BJ (cell line): ENCODE measurements at regions of chr22 and their contacts with region 1.

Region 1: GRCh38 chr22:38503021-38503420 is 3.1 kb downstream of the DDX17 start:
- DNase-seq: no peak
- H3K4me3 ChIP-seq: peak overlapping the region; percentile 91
- H3K27me3 ChIP-seq: no peaks in the 10 kb centered on the region
- CTCF ChIP-seq: no peak

Region 2: GRCh38 chr22:38513063-38513462 is 10.0 kb after region 1 on chr22:
- CTCF ChIA-PET with region 1: no interaction called
- POLR2A ChIA-PET with region 1: interaction called, 11 read pairs
- DNase-seq: no peak
- H3K4me3 ChIP-seq: no peak overlapping the region
- H3K27me3 ChIP-seq: no peaks in the 10 kb centered on the region
- CTCF ChIP-seq: no peak

Region 3: DNA sequence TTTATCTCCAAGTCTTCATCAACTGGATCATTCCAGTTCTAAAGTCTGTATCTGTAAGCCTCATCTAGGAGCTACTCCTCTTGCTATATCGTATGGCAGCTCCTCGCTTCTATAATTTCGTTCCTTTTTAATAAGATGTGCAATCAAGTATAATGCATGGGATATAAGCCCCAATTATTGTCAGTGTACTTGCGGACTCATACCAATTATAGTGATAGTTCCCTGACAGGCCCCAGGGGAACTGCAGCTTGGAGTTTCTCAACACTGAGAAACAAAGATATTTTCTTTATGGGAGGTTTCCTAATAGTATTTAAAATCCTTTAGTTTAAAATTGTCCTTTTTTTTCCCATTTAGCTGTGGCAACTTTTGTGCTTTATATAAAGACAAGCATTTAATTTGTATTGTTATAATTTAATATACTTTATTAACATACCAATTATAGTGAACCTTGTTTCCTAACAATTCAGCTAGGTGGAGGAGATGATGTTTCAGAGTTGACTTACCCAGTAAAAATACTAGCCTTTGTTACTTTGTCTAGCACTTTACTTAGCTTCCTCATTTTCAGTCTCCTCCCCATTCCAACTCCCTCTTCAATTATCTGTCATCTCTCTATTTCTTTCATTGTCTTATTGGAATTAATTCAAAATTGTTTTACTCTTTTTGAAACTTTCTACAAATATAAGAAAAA is 28.4 kb after region 1 on chr22:
- CTCF ChIA-PET with region 1: no interaction called
- POLR2A ChIA-PET with region 1: no interaction called
- DNase-seq: no peak
- H3K4me3 ChIP-seq: no peak overlapping the region
- H3K27me3 ChIP-seq: no peaks in the 10 kb centered on the region
- CTCF ChIP-seq: no peak